PC-9 (cell line): ENCODE measurements at regions of chr21 and their contacts with region 1.

Region 1: DNA sequence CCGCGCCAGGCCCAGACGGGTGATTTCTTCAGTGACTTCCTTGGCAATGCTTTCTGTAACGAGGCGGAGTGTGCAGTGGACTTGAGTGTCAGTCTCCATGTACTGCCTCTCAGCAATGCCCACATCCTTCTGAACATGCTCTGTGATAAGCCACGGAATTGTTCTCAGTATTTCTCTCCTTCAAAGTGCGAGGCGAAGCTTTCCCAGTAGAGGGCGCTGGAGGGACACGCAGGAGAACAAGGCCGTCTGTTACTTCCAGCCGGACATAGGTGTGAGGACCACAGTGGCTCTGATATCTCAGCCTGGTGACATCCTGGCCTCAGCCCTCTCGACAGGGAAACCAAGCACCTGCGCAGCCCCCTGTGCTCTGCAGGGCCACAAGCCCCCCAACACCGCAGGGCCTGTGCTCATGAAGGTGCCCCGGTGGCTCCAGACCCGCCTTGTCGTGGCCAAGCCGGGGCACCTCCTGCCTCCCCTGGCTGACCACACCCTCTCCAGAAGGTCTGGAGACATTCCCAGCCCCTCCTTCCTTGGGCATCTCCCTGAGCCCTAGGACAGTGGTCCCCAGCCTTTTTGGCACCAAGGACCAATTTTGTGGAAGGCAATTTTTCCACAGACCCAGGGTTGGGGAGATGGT is 46.1 kb upstream of the BACE2 start:
- DNase-seq: peak; percentile 56 to 76
- H3K4me3 ChIP-seq: no peak overlapping the region
- H3K27ac ChIP-seq: no peak overlapping the region
- H3K4me1 ChIP-seq: no peaks in the 10 kb centered on the region
- H3K27me3 ChIP-seq: peaks cover 3% of the 10 kb centered on the region
- CTCF ChIP-seq: peak; percentile 84

Region 2: GRCh38 chr21:41055266-41055665 is 66.6 kb before region 1 on chr21:
- CTCF ChIA-PET with region 1: no interaction called
- POLR2A ChIA-PET with region 1: interaction called, 11 read pairs
- intact Hi-C with region 1: no loop called
- DNase-seq: no peak
- H3K4me3 ChIP-seq: no peak overlapping the region
- H3K27ac ChIP-seq: no peak overlapping the region
- H3K4me1 ChIP-seq: no peaks in the 10 kb centered on the region
- H3K27me3 ChIP-seq: peaks cover 59% of the 10 kb centered on the region; the same call in 1 of the 2 replicates
- CTCF ChIP-seq: no peak

Region 3: GRCh38 chr21:41234570-41234969 is 112.7 kb after region 1 on chr21:
- CTCF ChIA-PET with region 1: no interaction called
- POLR2A ChIA-PET with region 1: no interaction called
- intact Hi-C with region 1: no loop called
- DNase-seq: no peak
- H3K4me3 ChIP-seq: no peak overlapping the region
- H3K27ac ChIP-seq: no peak overlapping the region
- H3K4me1 ChIP-seq: no peaks in the 10 kb centered on the region
- H3K27me3 ChIP-seq: no peaks in the 10 kb centered on the region
- CTCF ChIP-seq: no peak

Region 4: GRCh38 chr21:41477641-41478318 is 355.9 kb after region 1 on chr21:
- CTCF ChIA-PET with region 1: no interaction called
- POLR2A ChIA-PET with region 1: no interaction called
- intact Hi-C with region 1: loop called (anchors 5 kb)
- DNase-seq: peak; percentile 40 to 49
- H3K4me3 ChIP-seq: no peak overlapping the region
- H3K27ac ChIP-seq: peak overlapping the region; percentile 23; the same call in 1 of the 2 replicates
- H3K4me1 ChIP-seq: peaks cover 11% of the 10 kb centered on the region
- H3K27me3 ChIP-seq: no peaks in the 10 kb centered on the region
- CTCF ChIP-seq: no peak